ENCODE measurements at regions of chr2 and their contacts with region 1.

Region 1: DNA sequence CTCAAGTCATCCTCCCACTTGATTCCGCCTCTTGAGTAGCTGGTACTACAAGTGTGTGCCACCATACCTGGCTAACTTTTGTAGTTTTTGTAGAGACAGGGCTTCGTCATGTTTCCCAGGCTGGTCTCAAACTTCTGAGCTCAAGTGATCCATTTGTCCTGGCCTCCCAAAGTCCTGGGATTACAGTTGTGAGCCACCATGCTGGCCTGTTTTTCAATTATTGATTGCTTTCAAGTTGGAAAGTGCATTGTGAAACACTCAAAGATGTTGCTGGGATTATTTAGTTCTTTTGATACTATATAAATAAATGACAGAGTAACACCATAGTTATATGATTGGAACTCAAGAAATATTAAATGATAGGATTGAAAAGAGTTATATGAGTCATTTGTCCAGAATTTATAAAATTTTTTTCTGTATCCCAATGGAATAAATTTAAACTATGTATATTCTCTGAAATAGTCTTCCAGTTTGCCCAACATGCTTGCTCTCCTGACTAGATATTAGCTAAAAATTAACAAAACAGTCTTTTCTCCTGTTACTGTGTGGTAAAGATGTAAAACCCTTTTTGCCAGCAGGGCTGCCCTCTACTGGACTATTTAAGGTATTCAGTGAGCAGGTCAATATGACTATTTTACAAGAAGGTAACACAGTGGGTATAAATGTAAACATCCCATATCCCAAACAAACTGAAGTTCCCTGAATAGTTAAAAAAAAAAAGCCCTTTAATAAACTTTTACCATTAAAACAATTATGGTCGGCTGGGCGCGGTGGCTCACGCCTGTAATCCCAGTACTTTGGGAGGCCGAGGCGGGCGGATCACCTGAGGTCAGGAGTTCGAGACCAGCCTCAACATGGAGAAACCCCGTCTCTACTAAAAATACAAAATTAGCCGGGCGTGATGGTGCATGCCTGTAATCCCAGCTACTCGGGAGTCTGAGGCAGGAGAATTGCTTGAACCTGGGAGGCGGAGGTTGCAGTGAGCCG is 42.7 kb downstream of the ACSL3 start:
- DNase-seq: no peak
- H3K4me3 Mint-ChIP-seq: no peak overlapping the region
- H3K27ac Mint-ChIP-seq: no peak overlapping the region
- H3K4me1 Mint-ChIP-seq: peaks cover 15% of the 10 kb centered on the region
- H3K27me3 Mint-ChIP-seq: no peaks in the 10 kb centered on the region

Region 2: GRCh38 chr2:222797261-222797660 is 106.3 kb before region 1 on chr2:
- intact Hi-C with region 1: loop called (anchors 1 kb)
- DNase-seq: no peak
- H3K4me3 Mint-ChIP-seq: no peak overlapping the region
- H3K27ac Mint-ChIP-seq: no peak overlapping the region
- H3K4me1 Mint-ChIP-seq: no peaks in the 10 kb centered on the region
- H3K27me3 Mint-ChIP-seq: peaks cover 10% of the 10 kb centered on the region